ENCODE measurements at regions of chr5 and their contacts with region 1.

Region 1: GRCh38 chr5:148740966-148741742 is 85.3 kb upstream of the ADRB2 start:
- DNase-seq: no peak
- H3K4me3 ChIP-seq: no peak overlapping the region
- H3K27ac ChIP-seq: no peak overlapping the region
- H3K4me1 ChIP-seq: no peaks in the 10 kb centered on the region
- H3K27me3 ChIP-seq: no peaks in the 10 kb centered on the region
- CTCF ChIP-seq: peak in 2 of 3 experiments; percentile 50 to 60; a peak in 2 of 4 replicates
- EP300 ChIP-seq: no peak
- POLR2A ChIP-seq: no peak
- RAD21 ChIP-seq: peak; percentile 62 to 70

Region 2: GRCh38 chr5:148760945-148761638 is 19.9 kb after region 1 on chr5:
- CTCF ChIA-PET with region 1: interaction called, 14 read pairs
- POLR2A ChIA-PET with region 1: no interaction called
- DNase-seq: no peak
- H3K4me3 ChIP-seq: no peak overlapping the region
- H3K27ac ChIP-seq: no peak overlapping the region
- H3K4me1 ChIP-seq: no peaks in the 10 kb centered on the region
- H3K27me3 ChIP-seq: no peaks in the 10 kb centered on the region
- CTCF ChIP-seq: no peak
- EP300 ChIP-seq: no peak
- POLR2A ChIP-seq: no peak
- RAD21 ChIP-seq: no peak

Region 3: GRCh38 chr5:148791334-148791667 is 50.1 kb after region 1 on chr5:
- CTCF ChIA-PET with region 1: interaction called, 10 read pairs
- POLR2A ChIA-PET with region 1: no interaction called
- DNase-seq: no peak
- H3K4me3 ChIP-seq: no peak overlapping the region
- H3K27ac ChIP-seq: no peak overlapping the region
- H3K4me1 ChIP-seq: no peaks in the 10 kb centered on the region
- H3K27me3 ChIP-seq: no peaks in the 10 kb centered on the region
- CTCF ChIP-seq: no peak
- EP300 ChIP-seq: no peak
- POLR2A ChIP-seq: no peak
- RAD21 ChIP-seq: no peak

Region 4: DNA sequence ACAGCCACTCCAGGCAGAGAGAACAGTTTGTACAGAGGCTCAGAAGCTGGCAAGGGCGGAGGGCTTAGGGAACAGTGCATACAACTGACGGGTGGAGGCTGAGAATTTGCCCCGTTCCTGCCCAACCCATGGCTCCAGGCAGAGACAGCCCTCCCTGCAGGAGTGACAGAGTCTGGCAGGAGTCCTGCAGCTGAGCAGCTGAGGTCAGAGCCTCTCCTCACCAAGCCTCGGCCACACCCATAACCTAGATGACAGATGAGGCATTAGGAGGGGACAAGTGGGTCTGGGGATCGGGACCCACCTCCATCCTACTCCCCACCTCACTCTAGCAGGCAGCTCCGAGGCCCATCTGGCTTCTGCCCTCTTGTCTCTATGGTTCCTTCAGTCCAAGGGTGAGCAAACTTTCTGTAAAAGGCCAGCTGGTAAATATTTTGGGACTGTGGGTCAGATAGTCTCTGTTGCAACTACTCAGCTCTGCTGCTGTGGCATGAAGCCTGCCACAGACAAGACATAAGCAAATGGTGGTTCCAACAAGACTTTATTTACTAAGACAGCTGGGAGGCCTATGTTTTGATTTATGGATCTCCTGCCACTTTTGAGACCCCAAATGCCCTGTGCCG is 238.1 kb after region 1 on chr5:
- CTCF ChIA-PET with region 1: interaction called, 433 read pairs
- POLR2A ChIA-PET with region 1: no interaction called
- DNase-seq: no peak
- H3K4me3 ChIP-seq: no peak overlapping the region
- H3K27ac ChIP-seq: no peak overlapping the region
- H3K4me1 ChIP-seq: peaks cover 0 to 13% (median 5%) of the 10 kb centered on the region in 4 experiments; a peak in 4 of 7 replicates
- H3K27me3 ChIP-seq: no peaks in the 10 kb centered on the region
- CTCF ChIP-seq: no peak
- EP300 ChIP-seq: no peak
- POLR2A ChIP-seq: no peak
- RAD21 ChIP-seq: no peak

Region 5: GRCh38 chr5:148998174-148998797 is 257.1 kb after region 1 on chr5:
- CTCF ChIA-PET with region 1: interaction called, 61 read pairs
- POLR2A ChIA-PET with region 1: no interaction called
- DNase-seq: no peak
- H3K4me3 ChIP-seq: no peak overlapping the region
- H3K27ac ChIP-seq: no peak overlapping the region
- H3K4me1 ChIP-seq: no peaks in the 10 kb centered on the region; a peak in 1 of 7 replicates
- H3K27me3 ChIP-seq: no peaks in the 10 kb centered on the region
- CTCF ChIP-seq: peak in 2 of 3 experiments; percentile 56 to 72; a peak in 2 of 4 replicates
- EP300 ChIP-seq: no peak
- POLR2A ChIP-seq: no peak
- RAD21 ChIP-seq: peak; percentile 70 to 74

Region 6: GRCh38 chr5:149114403-149115312 is 373.5 kb after region 1 on chr5:
- CTCF ChIA-PET with region 1: interaction called, 93 read pairs
- POLR2A ChIA-PET with region 1: no interaction called
- DNase-seq: peak in 1 of 2 experiments; percentile 60
- H3K4me3 ChIP-seq: no peak overlapping the region
- H3K27ac ChIP-seq: no peak overlapping the region
- H3K4me1 ChIP-seq: no peaks in the 10 kb centered on the region
- H3K27me3 ChIP-seq: no peaks in the 10 kb centered on the region
- CTCF ChIP-seq: peak; percentile 63 to 96 (median 84)
- EP300 ChIP-seq: no peak
- POLR2A ChIP-seq: no peak
- RAD21 ChIP-seq: peak; percentile 90 to 97

Measured in H1 (cell line).